ENCODE measurements at regions of chr20 and their contacts with region 1.

Region 1: DNA sequence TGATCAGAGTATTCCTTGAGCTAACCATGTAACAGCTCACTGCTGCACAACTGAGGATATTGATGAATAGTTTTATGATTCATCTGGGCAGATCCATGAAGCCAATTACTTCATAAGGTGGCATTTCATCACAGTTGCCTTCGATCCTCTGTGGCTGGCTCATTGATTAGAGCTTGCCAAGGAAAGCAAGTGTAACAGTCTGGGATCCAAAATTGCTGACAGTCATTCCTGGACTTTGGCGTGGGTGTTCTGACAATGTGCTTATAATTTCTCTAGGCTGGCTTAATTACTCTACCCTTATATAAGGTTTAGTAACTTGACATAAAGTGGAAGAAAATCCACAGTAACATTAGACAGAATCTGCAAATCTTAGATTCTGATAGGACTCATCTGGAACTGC is 551.3 kb upstream of the CDH4 start:
- DNase-seq: no peak
- ATAC-seq: no peak
- H3K4me3 ChIP-seq: no peak overlapping the region
- H3K27ac ChIP-seq: no peak overlapping the region
- H3K4me1 ChIP-seq: no peaks in the 10 kb centered on the region
- H3K27me3 ChIP-seq: no peaks in the 10 kb centered on the region
- CTCF ChIP-seq: no peak
- POLR2A ChIP-seq: no peak

Region 2: DNA sequence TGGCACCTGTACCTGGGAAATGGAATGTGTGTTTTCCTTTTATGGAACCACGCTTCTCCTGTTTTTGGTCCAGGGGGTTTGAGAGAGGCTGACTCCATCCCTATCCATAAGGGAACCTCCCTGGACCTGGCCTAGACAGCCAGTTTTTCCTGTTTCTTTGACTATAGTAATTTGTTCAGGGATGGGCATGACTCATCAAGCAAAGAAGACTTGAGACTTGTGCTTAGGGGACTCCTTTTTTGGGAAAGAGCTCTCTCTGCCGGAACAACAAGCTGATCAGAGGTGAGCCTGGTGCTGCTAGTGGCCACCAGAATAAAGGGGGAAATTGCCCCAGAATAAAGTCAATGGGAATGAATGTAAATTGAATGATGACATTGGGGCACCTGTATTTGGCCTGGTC is 348.7 kb before region 1 on chr20:
- intact Hi-C with region 1: no loop called
- DNase-seq: no peak
- ATAC-seq: no peak
- H3K4me3 ChIP-seq: no peak overlapping the region
- H3K27ac ChIP-seq: no peak overlapping the region
- H3K4me1 ChIP-seq: no peaks in the 10 kb centered on the region
- H3K27me3 ChIP-seq: no peaks in the 10 kb centered on the region
- CTCF ChIP-seq: no peak
- POLR2A ChIP-seq: no peak

Region 3: GRCh38 chr20:60653111-60653845 is 47.5 kb before region 1 on chr20:
- intact Hi-C with region 1: loop called (anchors 10 kb)
- DNase-seq: no peak
- ATAC-seq: no peak
- H3K4me3 ChIP-seq: no peak overlapping the region
- H3K27ac ChIP-seq: no peak overlapping the region
- H3K4me1 ChIP-seq: no peaks in the 10 kb centered on the region
- H3K27me3 ChIP-seq: no peaks in the 10 kb centered on the region
- CTCF ChIP-seq: no peak
- POLR2A ChIP-seq: no peak